ENCODE measurements at regions of chr12 and their contacts with region 1.

Region 1: GRCh38 chr12:10140001-10140400 is 10.0 kb upstream of the CLEC7A start:
- DNase-seq: peak; percentile 66
- H3K4me3 Mint-ChIP-seq: no peak overlapping the region
- H3K27ac Mint-ChIP-seq: no peak overlapping the region
- H3K4me1 Mint-ChIP-seq: no peaks in the 10 kb centered on the region
- H3K27me3 Mint-ChIP-seq: peaks cover 8% of the 10 kb centered on the region

Region 2: DNA sequence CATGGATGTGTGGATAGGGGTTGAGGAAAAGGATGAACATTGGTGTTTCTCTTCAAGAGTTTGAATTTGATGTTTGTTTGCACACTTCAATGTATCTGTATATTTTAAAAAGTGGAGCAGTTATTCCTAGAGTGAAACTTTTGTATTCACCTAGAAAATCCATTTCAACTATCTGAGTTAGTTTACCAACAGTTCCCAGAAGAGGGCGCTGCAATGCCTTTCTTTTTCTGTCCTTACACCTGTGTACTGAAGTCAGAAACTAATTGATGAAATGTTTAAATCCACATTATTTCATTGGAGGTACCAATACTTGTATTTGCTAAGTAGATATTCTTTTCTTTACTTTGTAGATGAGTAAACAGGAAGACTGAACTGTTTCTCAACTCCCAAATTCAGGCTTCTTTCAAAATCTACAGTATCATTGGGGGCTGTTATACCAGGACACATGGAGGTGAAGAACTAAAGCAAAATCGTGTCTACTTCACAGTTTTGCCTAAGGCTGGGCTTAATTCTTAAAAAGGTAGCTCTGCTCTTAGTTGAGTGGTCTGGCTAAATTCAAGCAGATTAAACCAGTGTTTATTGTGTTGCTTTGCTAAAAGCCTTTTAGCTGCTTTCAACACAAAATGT is 505.7 kb before region 1 on chr12:
- CTCF ChIA-PET with region 1: no interaction called
- POLR2A ChIA-PET with region 1: no interaction called
- intact Hi-C with region 1: loop called (anchors 10 kb)
- DNase-seq: peak; percentile 81
- H3K4me3 Mint-ChIP-seq: no peak overlapping the region
- H3K27ac Mint-ChIP-seq: peak overlapping the region; percentile 66
- H3K4me1 Mint-ChIP-seq: peaks cover 60% of the 10 kb centered on the region
- H3K27me3 Mint-ChIP-seq: no peaks in the 10 kb centered on the region

Region 3: GRCh38 chr12:9940375-9940774 is 199.6 kb before region 1 on chr12:
- CTCF ChIA-PET with region 1: interaction called, 17 read pairs
- POLR2A ChIA-PET with region 1: no interaction called
- intact Hi-C with region 1: loop called (anchors 1 kb)
- DNase-seq: no peak
- H3K4me3 Mint-ChIP-seq: no peak overlapping the region
- H3K27ac Mint-ChIP-seq: no peak overlapping the region
- H3K4me1 Mint-ChIP-seq: peaks cover 16% of the 10 kb centered on the region
- H3K27me3 Mint-ChIP-seq: peaks cover 4% of the 10 kb centered on the region

Region 4: GRCh38 chr12:10033783-10034545 is 106.0 kb before region 1 on chr12:
- CTCF ChIA-PET with region 1: interaction called, 24 read pairs
- POLR2A ChIA-PET with region 1: interaction called, 3 read pairs
- intact Hi-C with region 1: loop called (anchors 1 kb)
- DNase-seq: no peak
- H3K4me3 Mint-ChIP-seq: no peak overlapping the region
- H3K27ac Mint-ChIP-seq: no peak overlapping the region
- H3K4me1 Mint-ChIP-seq: no peaks in the 10 kb centered on the region
- H3K27me3 Mint-ChIP-seq: no peaks in the 10 kb centered on the region

Region 5: DNA sequence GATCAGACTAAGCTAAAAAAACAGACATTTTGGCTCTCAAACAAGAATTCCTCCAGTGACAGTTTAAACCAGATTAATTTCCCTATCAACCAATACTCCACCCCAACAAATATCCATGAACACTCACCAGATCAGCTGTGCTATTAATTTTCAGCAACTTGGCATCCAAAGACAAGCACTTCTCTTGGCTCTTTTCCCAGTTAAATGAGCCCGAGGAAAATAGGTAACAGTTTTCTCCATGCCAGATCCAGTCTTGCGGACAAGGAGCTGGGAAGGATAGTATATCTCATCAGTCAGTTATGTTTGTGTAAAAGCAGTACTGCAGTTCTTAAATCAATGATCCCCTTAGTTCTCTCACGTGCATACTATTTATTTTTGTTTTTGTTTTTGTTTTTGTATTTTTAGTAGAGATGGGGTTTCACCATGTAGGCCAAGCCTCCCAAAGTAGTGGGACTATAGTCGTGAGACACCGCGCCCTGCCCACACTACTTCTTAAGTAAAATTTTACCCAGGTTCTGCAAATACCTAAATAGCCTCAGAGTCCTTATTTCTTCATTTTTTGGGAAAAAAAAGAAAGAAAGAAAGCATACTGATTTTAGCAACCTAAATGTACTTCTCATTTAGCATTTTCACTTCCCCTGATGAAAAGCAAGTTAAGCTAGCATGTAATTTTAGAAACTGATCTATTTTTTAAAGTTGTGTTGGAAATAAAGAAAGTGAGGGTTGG is 20.8 kb after region 1 on chr12:
- CTCF ChIA-PET with region 1: no interaction called
- POLR2A ChIA-PET with region 1: no interaction called
- intact Hi-C with region 1: no loop called
- DNase-seq: no peak
- H3K4me3 Mint-ChIP-seq: no peak overlapping the region
- H3K27ac Mint-ChIP-seq: no peak overlapping the region
- H3K4me1 Mint-ChIP-seq: no peaks in the 10 kb centered on the region
- H3K27me3 Mint-ChIP-seq: peaks cover 6% of the 10 kb centered on the region